ENCODE measurements at regions of chr2 and their contacts with region 1.

Region 1: DNA sequence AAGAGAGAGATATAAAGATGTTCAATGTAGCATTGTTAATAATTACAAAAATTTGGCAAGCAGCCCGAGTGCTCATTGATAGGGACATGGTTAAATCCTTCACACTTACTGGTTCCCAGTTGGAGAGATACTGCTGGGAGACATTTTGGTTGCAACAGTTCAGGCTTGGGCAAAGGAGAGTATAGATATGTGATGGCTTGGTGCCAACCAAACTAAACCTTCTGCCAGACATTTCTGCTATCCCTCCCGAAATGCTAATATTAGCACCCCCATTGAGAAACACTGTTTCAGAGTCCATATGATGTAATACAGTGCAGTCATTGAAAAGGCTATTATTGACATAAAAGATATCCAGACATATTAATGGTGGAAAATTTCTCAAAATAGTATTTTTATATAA is 11.5 kb downstream of the GEN1 start:
- DNase-seq: no peak
- ATAC-seq: no peak
- H3K4me3 ChIP-seq: no peak overlapping the region
- H3K27ac ChIP-seq: no peak overlapping the region
- H3K4me1 ChIP-seq: no peaks in the 10 kb centered on the region
- H3K27me3 ChIP-seq: no peaks in the 10 kb centered on the region
- CTCF ChIP-seq: no peak

Region 2: DNA sequence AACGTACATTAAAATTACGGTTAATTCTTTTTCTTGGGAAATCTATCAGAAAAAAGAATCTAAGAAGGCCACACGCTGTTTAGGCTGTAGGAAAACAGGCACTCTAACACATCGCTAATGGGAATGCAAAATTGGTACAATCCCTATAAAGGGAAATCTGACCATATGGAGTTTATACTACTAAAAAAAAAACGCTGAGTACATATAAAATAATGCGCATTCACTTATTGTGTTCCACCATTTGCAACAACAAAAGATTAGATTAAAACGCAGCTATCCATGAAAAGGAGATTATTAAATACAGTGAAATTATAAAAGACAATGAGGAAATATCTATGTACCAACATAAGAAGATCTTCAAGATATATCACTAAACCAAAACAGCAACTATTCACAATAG is 74.6 kb before region 1 on chr2:
- CTCF ChIA-PET with region 1: no interaction called
- POLR2A ChIA-PET with region 1: no interaction called
- in situ Hi-C with region 1: no loop called
- intact Hi-C with region 1: no loop called
- DNase-seq: no peak
- ATAC-seq: no peak
- H3K4me3 ChIP-seq: no peak overlapping the region
- H3K27ac ChIP-seq: no peak overlapping the region
- H3K4me1 ChIP-seq: no peaks in the 10 kb centered on the region
- H3K27me3 ChIP-seq: no peaks in the 10 kb centered on the region
- CTCF ChIP-seq: no peak

Region 3: GRCh38 chr2:17753803-17754663 is 11.4 kb before region 1 on chr2 and contains the starts of genes GEN1 and SMC6:
- CTCF ChIA-PET with region 1: no interaction called
- POLR2A ChIA-PET with region 1: interaction called, 12 read pairs
- in situ Hi-C with region 1: no loop called
- intact Hi-C with region 1: no loop called
- DNase-seq: peak; percentile 69
- ATAC-seq: peak; percentile 94
- H3K4me3 ChIP-seq: peak within 1 kb of the TSS; percentile 75 to 91
- H3K27ac ChIP-seq: peak within 1 kb of the TSS; percentile 91
- H3K4me1 ChIP-seq: peaks cover 31% of the 10 kb centered on the region
- H3K27me3 ChIP-seq: no peaks in the 10 kb centered on the region
- CTCF ChIP-seq: no peak
- total RNA-seq, gene GEN1: 24.0 TPM
- total RNA-seq, gene SMC6: 43.8 TPM

Region 4: GRCh38 chr2:17958466-17959092 is 193.2 kb after region 1 on chr2:
- CTCF ChIA-PET with region 1: no interaction called
- POLR2A ChIA-PET with region 1: no interaction called
- in situ Hi-C with region 1: no loop called
- intact Hi-C with region 1: no loop called
- DNase-seq: no peak
- ATAC-seq: no peak
- H3K4me3 ChIP-seq: no peak overlapping the region
- H3K27ac ChIP-seq: no peak overlapping the region
- H3K4me1 ChIP-seq: no peaks in the 10 kb centered on the region
- H3K27me3 ChIP-seq: no peaks in the 10 kb centered on the region; the same call in 1 of the 2 replicates
- CTCF ChIP-seq: no peak